Colonic mucosa (tissue), 4 donors: ENCODE measurements at regions of chr11 and their contacts with region 1.

Region 1: GRCh38 chr11:15650105-15650938 is 535.6 kb downstream of the INSC start:
- DNase-seq: peak; percentile 93
- H3K4me3 ChIP-seq: peak overlapping the region; percentile 34
- H3K27ac ChIP-seq: no peak overlapping the region
- H3K4me1 ChIP-seq: peaks cover 5% of the 10 kb centered on the region
- H3K27me3 ChIP-seq: no peaks in the 10 kb centered on the region
- CTCF ChIP-seq: peak; percentile 99

Region 2: GRCh38 chr11:15327786-15328231 is 322.5 kb before region 1 on chr11:
- intact Hi-C with region 1: loop called (anchors 10 kb)
- DNase-seq: peak; percentile 40
- H3K4me3 ChIP-seq: no peak overlapping the region
- H3K27ac ChIP-seq: no peak overlapping the region
- H3K4me1 ChIP-seq: no peaks in the 10 kb centered on the region
- H3K27me3 ChIP-seq: no peaks in the 10 kb centered on the region
- CTCF ChIP-seq: peak; percentile 34

Region 3: DNA sequence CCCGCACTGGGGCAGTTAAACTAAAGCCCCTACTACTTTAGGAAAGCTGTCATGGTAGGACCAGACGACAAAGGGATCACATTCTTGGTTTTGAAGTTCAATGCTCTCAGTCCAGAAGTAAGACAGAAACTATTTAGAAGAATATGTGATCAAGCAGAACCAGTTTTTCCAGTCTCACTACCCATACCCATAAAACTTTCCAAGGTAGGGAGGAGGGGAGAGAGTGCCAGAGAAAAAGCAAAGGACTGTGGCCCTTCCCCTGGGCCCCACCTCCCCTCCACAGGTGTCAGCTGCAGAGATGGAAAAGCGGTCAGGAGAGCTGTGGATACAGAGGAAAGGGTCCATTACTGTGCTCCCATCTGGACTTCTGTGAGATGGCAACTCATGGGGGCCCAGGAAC is 118.9 kb after region 1 on chr11:
- intact Hi-C with region 1: loop called (anchors 5 kb)
- DNase-seq: peak; percentile 77
- H3K4me3 ChIP-seq: no peak overlapping the region
- H3K27ac ChIP-seq: peak overlapping the region; percentile 80
- H3K4me1 ChIP-seq: no peaks in the 10 kb centered on the region
- H3K27me3 ChIP-seq: no peaks in the 10 kb centered on the region
- CTCF ChIP-seq: no peak

Region 4: DNA sequence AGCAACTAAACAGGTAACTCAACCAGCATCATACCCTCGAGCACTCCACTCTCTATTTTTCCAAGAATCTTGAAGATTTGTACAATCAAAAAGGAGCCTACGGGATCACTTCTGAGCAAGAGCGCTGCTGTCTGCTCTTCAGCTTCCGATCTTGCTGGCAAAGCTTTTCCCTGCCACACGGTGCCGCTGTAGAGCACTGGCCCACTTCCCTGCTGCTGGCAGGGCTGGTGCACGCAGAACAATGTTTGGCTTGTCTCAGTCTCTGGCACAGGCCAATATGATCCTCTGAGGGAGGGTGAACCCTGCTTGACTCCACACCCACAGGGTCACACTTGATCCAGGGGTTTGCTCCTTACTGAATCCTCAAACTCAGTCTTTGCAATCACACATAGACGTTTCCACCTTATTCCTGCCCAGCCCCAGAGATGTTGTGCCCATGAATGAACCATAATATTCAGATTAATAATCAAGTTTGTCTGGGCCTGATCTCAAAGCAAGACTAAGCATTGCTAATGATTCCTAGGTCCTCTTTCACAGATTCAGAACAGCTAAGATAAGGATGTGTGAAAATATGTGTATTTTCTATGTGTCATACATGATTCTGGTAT is 169.5 kb after region 1 on chr11:
- intact Hi-C with region 1: loop called (anchors 10 kb)
- DNase-seq: peak; percentile 86
- H3K4me3 ChIP-seq: no peak overlapping the region
- H3K27ac ChIP-seq: no peak overlapping the region
- H3K4me1 ChIP-seq: no peaks in the 10 kb centered on the region
- H3K27me3 ChIP-seq: no peaks in the 10 kb centered on the region
- CTCF ChIP-seq: peak; percentile 87

Region 5: GRCh38 chr11:16111690-16112089 is 461.4 kb after region 1 on chr11:
- intact Hi-C with region 1: no loop called
- DNase-seq: no peak
- H3K4me3 ChIP-seq: no peak overlapping the region
- H3K27ac ChIP-seq: no peak overlapping the region
- H3K4me1 ChIP-seq: no peaks in the 10 kb centered on the region
- H3K27me3 ChIP-seq: no peaks in the 10 kb centered on the region
- CTCF ChIP-seq: no peak

Region 6: DNA sequence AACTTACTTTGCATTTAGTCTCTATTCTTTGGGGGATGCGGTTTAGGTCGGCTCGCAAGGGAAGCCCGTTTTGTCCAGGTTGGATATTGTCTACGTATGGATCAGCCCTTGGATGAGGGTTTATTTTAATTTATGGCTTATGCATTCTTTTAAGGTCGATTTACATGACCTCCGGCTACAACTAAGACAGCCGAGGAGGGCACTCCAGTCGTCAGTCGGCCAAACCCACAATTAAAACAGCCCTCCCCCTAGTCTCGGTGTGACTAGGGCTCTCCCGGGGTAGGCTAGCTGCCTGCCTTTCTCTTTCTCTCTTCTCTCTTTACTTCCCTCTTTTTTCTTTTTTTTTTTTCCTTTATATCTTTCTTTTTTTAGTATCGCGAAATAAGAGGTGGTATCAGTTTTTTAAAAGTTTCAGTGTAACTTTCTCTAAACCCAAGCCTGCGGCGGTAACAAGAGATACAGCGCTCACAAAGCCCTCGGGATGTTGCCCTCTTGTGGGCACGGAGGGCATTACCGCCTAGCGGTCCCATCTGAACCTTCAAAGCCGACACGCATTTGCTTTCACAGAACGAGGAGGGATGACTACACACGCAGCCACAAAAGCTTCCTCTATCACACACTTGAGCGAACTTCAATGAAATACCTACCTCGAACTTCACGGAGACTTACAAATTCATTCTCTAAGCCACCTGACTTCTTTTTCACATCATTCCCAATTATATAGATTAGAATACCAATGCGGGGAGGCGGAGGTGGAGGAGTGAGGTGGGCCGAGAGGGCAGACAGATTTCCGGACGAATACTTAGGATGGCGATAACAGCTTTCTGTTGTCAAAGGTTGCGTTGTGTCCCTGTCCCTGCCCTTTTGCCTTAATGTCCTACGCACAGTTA is 955.8 kb after region 1 on chr11:
- intact Hi-C with region 1: loop called (anchors 5 kb)
- DNase-seq: peak; percentile 92
- H3K4me3 ChIP-seq: peak overlapping the region; percentile 45
- H3K27ac ChIP-seq: peak overlapping the region; percentile 14
- H3K4me1 ChIP-seq: peaks cover 6% of the 10 kb centered on the region
- H3K27me3 ChIP-seq: peaks cover 34% of the 10 kb centered on the region
- CTCF ChIP-seq: peak; percentile 93